ENCODE measurements at regions of chr2 and their contacts with region 1.

Region 1: DNA sequence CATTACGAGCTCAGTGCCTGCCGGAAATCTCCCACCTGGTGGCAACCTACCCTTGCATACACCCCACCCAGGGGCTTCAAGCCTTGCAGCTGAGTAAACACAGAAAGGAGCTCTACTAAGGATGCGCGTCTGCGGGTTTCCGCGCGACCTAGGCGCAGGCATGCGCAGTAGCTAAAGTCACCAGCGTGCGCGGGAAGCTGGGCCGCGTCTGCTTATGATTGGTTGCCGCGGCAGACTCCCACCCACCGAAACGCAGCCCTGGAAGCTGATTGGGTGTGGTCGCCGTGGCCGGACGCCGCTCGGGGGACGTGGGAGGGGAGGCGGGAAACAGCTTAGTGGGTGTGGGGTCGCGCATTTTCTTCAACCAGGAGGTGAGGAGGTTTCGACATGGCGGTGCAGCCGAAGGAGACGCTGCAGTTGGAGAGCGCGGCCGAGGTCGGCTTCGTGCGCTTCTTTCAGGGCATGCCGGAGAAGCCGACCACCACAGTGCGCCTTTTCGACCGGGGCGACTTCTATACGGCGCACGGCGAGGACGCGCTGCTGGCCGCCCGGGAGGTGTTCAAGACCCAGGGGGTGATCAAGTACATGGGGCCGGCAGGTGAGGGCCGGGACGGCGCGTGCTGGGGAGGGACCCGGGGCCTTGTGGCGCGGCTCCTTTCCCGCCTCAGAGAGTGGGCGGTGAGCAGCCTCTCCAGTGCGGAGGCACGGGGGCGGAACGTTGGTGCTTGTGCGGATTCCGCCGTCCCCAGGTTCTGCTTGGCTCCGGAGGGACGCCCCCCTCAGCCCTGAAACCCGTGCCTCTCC is at the start of gene MSH2:
- DNase-seq: peak; percentile 97 to 100
- ATAC-seq: peak; percentile 97
- H3K4me3 ChIP-seq: peak within 1 kb of the TSS; percentile 83
- H3K27ac ChIP-seq: peak within 1 kb of the TSS; percentile 83 to 93
- H3K4me1 ChIP-seq: peaks cover 11% of the 10 kb centered on the region; the same call in 1 of the 3 replicates
- CTCF ChIP-seq: no peak
- EP300 ChIP-seq: no peak
- POLR2A ChIP-seq: peak; percentile 78
- RAD21 ChIP-seq: no peak
- polyA plus RNA-seq, gene MSH2: 46.2 and 59.0 TPM in 2 replicates

Region 2: GRCh38 chr2:46847235-46848068 is 555.6 kb before region 1 on chr2:
- CTCF ChIA-PET with region 1: no interaction called
- POLR2A ChIA-PET with region 1: no interaction called
- DNase-seq: peak; percentile 52 to 90
- ATAC-seq: peak; percentile 45 to 68
- H3K4me3 ChIP-seq: no peak overlapping the region
- H3K27ac ChIP-seq: peak overlapping the region; percentile 97 to 99
- H3K4me1 ChIP-seq: peaks cover 66% of the 10 kb centered on the region
- CTCF ChIP-seq: no peak
- EP300 ChIP-seq: peak; percentile 78 to 90; a peak in 4 of 5 replicates
- POLR2A ChIP-seq: no peak
- RAD21 ChIP-seq: peak; percentile 15 to 57; a peak in 4 of 5 replicates

Region 3: DNA sequence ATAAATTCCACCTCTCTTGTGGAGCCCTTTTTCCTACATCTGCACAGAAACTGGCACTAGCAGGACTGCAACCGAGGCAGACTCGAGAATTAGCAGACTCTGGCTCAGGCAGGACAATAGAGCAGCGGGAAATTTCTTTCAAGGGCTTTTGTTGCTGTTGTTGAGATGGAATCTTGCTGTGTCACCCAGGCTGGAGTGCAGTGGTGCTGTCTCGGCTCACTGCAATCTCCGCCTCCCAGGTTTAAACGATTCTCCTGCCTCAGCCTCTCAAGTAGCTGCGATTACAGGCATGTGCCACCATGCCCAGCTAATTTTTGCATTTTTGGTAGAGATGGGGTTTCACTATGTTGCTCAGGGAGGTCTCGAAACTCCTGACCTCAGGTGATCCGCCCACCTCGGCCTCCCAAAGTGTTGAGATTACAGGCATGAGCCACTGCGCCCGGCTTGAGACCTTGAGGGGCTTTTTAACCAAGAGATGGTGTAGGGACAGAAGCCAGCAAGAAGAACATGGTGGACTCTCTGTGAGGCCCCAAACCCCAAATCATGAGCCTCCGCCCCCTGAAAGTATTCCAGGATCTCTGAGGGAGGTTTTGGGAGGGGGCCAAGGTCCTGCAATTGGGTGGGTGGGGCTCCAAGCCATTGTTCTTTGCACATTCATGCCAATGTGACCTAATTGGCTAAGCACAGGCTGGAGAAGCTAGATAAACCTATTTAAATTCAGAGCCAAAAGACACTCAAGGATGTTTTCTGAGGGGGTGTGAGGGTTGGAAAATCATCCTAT is 68.5 kb before region 1 on chr2:
- CTCF ChIA-PET with region 1: interaction called, 28 read pairs
- POLR2A ChIA-PET with region 1: no interaction called
- DNase-seq: no peak
- ATAC-seq: peak in 1 of 2 experiments; percentile 32; a peak in 4 of 6 replicates
- H3K4me3 ChIP-seq: no peak overlapping the region
- H3K27ac ChIP-seq: peak overlapping the region in 1 of 2 experiments; percentile 57; a peak in 3 of 6 replicates
- H3K4me1 ChIP-seq: peaks cover 9% of the 10 kb centered on the region; the same call in 2 of the 3 replicates
- CTCF ChIP-seq: no peak
- EP300 ChIP-seq: no peak
- POLR2A ChIP-seq: no peak
- RAD21 ChIP-seq: no peak

Region 4: GRCh38 chr2:47339745-47340541 is 63.1 kb before region 1 on chr2:
- CTCF ChIA-PET with region 1: interaction called, 28 read pairs
- POLR2A ChIA-PET with region 1: interaction called, 13 read pairs
- DNase-seq: peak in 1 of 2 experiments; percentile 59
- ATAC-seq: peak; percentile 15 to 54; a peak in 5 of 6 replicates
- H3K4me3 ChIP-seq: no peak overlapping the region
- H3K27ac ChIP-seq: peak overlapping the region; percentile 12 to 74; a peak in 4 of 6 replicates
- H3K4me1 ChIP-seq: peaks cover 27% of the 10 kb centered on the region
- CTCF ChIP-seq: no peak
- EP300 ChIP-seq: no peak
- POLR2A ChIP-seq: no peak
- RAD21 ChIP-seq: no peak

Region 5: DNA sequence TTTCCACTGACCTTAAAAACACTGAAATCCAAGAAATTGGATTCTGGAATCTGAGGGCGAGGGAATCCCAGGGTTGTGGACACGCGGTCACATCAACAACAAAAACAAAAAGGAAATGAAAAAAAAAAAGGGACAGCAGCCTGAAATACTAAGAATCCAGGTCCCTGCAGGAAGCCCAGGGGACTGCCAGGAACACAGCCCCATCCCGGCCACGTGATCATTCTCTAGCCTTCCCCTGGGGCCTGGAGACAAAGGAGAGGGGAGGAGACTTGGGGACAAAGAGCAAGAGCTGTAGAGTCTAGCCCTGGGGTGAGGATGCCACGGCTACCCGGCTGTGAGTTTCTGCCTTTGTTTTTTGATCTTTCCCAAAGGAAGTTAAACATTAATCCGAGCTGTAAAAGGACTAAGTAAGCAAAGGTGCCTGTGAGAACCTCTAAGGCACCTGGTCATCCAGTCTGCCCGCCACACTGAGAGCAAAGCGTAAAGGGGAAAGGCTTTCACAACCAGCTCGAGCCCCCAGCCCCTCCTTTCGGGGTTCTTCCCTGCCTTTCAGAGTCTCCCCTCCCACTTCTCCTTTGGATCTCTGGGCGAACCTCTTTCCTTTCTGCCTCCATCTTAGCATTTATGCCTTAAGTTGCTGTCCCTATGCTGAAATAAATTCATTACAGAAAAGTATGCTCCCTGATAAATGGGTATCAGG is 58.0 kb before region 1 on chr2:
- CTCF ChIA-PET with region 1: interaction called, 3 read pairs
- POLR2A ChIA-PET with region 1: interaction called, 13 read pairs
- DNase-seq: peak; percentile 99
- ATAC-seq: peak; percentile 99
- H3K4me3 ChIP-seq: peak overlapping the region; percentile 44
- H3K27ac ChIP-seq: peak overlapping the region; percentile 82 to 93
- H3K4me1 ChIP-seq: peaks cover 42% of the 10 kb centered on the region
- CTCF ChIP-seq: no peak
- EP300 ChIP-seq: no peak
- POLR2A ChIP-seq: peak; percentile 37
- RAD21 ChIP-seq: peak in 1 of 2 experiments; percentile 10; a peak in 1 of 5 replicates

Region 6: DNA sequence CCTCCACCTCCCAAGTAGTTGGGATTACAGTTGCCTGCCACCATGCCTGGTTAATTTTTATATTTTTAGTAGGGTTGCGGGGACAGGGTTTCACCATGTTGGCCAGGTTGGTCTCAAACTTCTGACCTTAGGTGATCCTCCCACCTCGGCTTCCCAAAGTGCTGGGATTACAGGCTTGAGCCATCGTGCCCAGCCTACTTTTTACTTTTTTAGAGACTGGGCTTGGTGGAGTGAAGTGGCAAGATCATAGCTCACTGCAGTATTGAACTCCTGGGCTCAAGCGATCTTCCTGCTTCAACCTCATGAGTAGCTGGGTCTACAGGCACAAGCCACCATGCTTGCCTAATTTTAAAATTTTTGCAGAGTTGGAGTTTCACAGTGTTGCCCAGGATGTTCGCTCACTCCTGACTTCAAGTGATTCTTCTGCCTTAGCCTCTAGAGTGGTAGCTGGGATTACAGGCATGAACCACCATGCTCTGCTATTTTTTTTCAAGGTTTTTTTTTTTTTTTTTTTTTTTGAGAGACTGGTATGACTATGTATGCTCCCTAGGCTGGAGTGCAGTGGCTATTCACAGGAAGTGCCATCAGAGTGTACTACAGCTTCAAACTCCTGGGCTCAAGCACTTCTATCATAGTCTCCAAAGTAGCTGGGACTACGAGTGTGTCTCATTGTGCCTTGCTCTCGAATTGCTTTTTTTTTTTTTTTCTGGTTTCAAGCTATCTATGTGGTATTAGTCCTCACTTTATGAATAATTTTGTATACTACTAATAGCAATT is 11.9 kb after region 1 on chr2:
- CTCF ChIA-PET with region 1: interaction called, 3 read pairs
- POLR2A ChIA-PET with region 1: interaction called, 10 read pairs
- DNase-seq: no peak
- ATAC-seq: peak; percentile 54 to 74
- H3K4me3 ChIP-seq: no peak overlapping the region
- H3K27ac ChIP-seq: no peak overlapping the region
- H3K4me1 ChIP-seq: no peaks in the 10 kb centered on the region
- CTCF ChIP-seq: no peak
- EP300 ChIP-seq: no peak
- POLR2A ChIP-seq: no peak
- RAD21 ChIP-seq: no peak

Region 7: GRCh38 chr2:47822518-47822917 is 419.5 kb after region 1 on chr2:
- CTCF ChIA-PET with region 1: no interaction called
- POLR2A ChIA-PET with region 1: no interaction called
- DNase-seq: no peak
- ATAC-seq: no peak
- H3K4me3 ChIP-seq: no peak overlapping the region
- H3K27ac ChIP-seq: no peak overlapping the region
- H3K4me1 ChIP-seq: peaks cover 6% of the 10 kb centered on the region; the same call in 1 of the 3 replicates
- CTCF ChIP-seq: no peak
- EP300 ChIP-seq: no peak
- POLR2A ChIP-seq: no peak
- RAD21 ChIP-seq: no peak

Measured in A549 (cell line).